Endothelial cell of umbilical vein (primary cell): ENCODE measurements at regions of chr13 and their contacts with region 1.

Region 1: DNA sequence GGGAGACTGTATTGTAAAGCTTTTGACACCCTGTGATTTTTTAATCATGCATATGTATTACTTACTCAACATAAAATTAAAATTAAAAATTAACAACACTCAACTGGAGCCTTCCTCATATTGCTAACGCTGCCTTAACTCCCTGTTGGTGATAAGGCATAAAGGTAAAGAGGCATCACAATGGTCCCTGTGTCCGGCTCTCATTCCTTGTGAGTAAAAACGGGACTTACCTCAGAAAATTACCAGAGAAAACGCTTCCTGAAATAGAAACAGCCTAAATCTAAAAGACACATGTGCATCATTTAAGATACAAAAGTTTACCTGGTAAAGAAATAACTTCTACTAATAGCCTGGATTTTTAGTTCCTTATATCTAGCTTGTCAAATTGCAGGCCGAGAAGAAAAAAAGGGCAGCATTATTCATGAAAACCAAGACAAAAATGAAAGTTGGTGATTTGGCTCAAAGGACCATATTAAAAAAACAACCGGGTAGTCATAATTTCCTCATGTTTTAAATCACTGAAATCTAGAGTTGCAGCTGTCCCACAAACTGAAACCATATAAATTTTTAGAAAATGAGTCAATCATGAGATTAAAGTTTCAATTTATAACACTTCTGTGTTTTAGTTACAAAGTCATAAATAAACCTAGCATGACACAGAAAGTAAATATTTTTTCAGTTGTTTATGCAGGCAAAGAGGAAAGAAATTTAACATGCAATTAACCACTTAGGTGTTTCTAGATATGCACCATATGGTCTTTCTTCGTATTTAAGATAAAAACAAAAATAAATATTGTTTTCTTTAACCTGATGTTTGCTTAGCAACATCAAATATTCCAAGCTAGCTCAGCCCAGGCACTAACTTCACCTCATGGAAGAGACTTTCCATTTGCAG is 94.7 kb downstream of the MIPEP start:
- DNase-seq: peak; percentile 91
- H3K4me3 ChIP-seq: peak overlapping the region in 1 of 3 experiments; percentile 47
- H3K27ac ChIP-seq: peak overlapping the region; percentile 85
- H3K4me1 ChIP-seq: peaks cover 22% of the 10 kb centered on the region
- H3K27me3 ChIP-seq: no peaks in the 10 kb centered on the region
- CTCF ChIP-seq: no peak
- POLR2A ChIP-seq: peak; percentile 28

Region 2: DNA sequence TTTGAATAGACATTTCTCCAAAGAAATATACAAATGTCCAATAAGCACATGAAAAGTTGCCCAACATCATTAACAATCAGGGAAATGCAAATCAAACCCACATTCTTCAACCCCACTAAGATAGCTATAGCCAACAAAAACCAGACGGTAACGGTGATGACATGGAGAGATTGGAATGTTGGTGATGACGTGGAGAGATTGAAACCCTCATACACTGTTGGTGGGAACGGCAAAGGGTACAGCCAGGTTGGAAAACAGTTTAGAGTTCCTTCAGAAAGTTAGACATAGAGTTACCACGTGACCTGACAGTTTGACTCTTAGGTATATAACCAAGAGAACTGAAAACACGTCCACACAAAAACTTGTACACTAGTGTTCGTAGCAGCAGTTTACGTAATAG is 176.2 kb before region 1 on chr13:
- CTCF ChIA-PET with region 1: no interaction called
- POLR2A ChIA-PET with region 1: no interaction called
- dilution Hi-C with region 1: no loop called
- intact Hi-C with region 1: loop called (anchors 2 kb)
- DNase-seq: peak; percentile 58
- H3K4me3 ChIP-seq: no peak overlapping the region
- H3K27ac ChIP-seq: peak overlapping the region; percentile 92
- H3K4me1 ChIP-seq: peaks cover 27% of the 10 kb centered on the region
- H3K27me3 ChIP-seq: peaks cover 2 to 4% of the 10 kb centered on the region in 2 experiments
- CTCF ChIP-seq: no peak
- POLR2A ChIP-seq: no peak